ENCODE measurements at regions of chr12 and their contacts with region 1.

Region 1: GRCh38 chr12:11707535-11707934 is 58.1 kb downstream of the ETV6 start:
- DNase-seq: no peak
- ATAC-seq: no peak
- H3K4me3 ChIP-seq: no peak overlapping the region
- H3K27ac ChIP-seq: peak overlapping the region in 1 of 2 donors; percentile 9
- H3K4me1 ChIP-seq: peaks cover 11 to 16% of the 10 kb centered on the region in 2 donors
- H3K27me3 ChIP-seq: no peaks in the 10 kb centered on the region

Region 2: DNA sequence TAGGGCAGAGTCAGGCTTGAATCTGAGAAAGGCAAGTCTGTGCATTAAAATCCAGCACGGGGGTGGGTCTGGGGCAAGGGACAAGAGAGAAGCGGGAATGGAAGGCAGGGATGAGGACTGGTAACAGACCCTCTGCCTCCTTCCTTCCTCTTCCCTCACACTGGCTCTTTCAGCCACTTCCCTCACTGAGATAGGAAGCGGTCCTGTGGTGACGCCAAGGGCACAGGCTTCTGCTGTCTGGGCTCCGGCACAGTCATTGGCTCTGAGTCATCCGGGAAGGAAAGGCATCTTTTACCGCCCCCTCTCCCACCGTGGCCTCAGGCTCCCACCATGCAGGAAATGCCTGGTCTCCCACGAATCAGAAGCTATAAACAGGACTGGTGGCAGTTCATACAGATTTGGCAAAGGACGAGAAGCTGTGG is 12.2 kb after region 1 on chr12:
- intact Hi-C with region 1: loop called in 1 of 2 experiments (anchors 2 kb)
- DNase-seq: peak; percentile 86 to 90
- ATAC-seq: peak; percentile 74
- H3K4me3 ChIP-seq: no peak overlapping the region
- H3K27ac ChIP-seq: peak overlapping the region in 1 of 2 donors; percentile 43
- H3K4me1 ChIP-seq: peaks cover 4 to 9% of the 10 kb centered on the region in 2 donors
- H3K27me3 ChIP-seq: no peaks in the 10 kb centered on the region

Measured in aorta (tissue), 5 donors.